Activated CD4-positive, alpha-beta T cell treated with anti-CD3 and anti-CD28 coated beads for 36 hours (primary cell): ENCODE measurements at regions of chr10 and their contacts with region 1.

Region 1: DNA sequence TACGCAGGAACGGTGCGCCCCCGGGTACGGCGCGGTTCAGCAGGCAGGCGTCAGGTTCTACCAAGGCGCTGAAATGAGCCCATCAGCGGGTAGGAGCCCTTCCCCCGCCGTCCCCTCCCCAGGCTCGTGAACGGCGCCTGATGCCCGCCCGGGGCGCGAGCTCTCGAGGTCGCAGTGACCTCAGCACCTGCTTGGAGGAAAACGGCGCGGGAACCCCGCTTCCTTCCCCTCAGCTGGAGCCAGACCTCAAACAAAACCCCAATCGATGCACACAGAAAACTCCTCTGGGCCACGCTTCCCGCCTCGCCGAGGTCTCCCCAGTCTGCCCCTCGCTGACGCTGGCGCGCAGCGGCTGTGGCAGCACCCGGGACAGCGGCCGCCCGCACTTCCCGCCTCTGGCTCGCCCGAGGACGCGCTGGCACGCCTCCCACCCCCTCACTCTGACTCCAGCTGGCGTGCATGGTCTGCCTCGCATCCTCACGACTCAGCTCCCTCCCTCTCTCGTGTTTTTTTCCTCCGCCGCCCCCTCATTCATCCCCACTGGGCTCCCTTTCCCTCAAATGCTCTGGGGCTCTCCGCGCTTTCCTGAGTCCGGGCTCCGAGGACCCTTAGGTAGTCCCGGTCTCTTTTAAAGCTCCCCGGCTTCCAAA is 514 bp upstream of the GAD2 start:
- DNase-seq: peak; percentile 78
- ATAC-seq: peak; percentile 87
- H3K4me3 Mint-ChIP-seq: peak overlapping the region; percentile 62
- H3K27ac Mint-ChIP-seq: no peak overlapping the region
- H3K4me1 Mint-ChIP-seq: peaks cover 36% of the 10 kb centered on the region
- H3K27me3 Mint-ChIP-seq: peaks cover 79% of the 10 kb centered on the region

Region 2: GRCh38 chr10:25174461-25175230 is 1041.4 kb before region 1 on chr10 and contains the start of gene GPR158:
- CTCF ChIA-PET with region 1: no interaction called
- POLR2A ChIA-PET with region 1: no interaction called
- intact Hi-C with region 1: loop called in 1 of 2 experiments (anchors 10 kb)
- DNase-seq: peak; percentile 79
- ATAC-seq: peak; percentile 75
- H3K4me3 Mint-ChIP-seq: peak within 1 kb of the TSS; percentile 47
- H3K27ac Mint-ChIP-seq: no peak within 1 kb of the TSS
- H3K4me1 Mint-ChIP-seq: peaks cover 6% of the 10 kb centered on the region
- H3K27me3 Mint-ChIP-seq: peaks cover 51% of the 10 kb centered on the region
- total RNA-seq, gene GPR158: not detected

Region 3: GRCh38 chr10:25934621-25935139 is 281.4 kb before region 1 on chr10:
- CTCF ChIA-PET with region 1: no interaction called
- POLR2A ChIA-PET with region 1: no interaction called
- intact Hi-C with region 1: no loop called
- DNase-seq: peak; percentile 47
- ATAC-seq: peak; percentile 65
- H3K4me3 Mint-ChIP-seq: peak overlapping the region; percentile 46
- H3K27ac Mint-ChIP-seq: peak overlapping the region; percentile 21
- H3K4me1 Mint-ChIP-seq: peaks cover 7% of the 10 kb centered on the region
- H3K27me3 Mint-ChIP-seq: peaks cover 37% of the 10 kb centered on the region